ENCODE measurements at regions of chr2 and their contacts with region 1.

Region 1: DNA sequence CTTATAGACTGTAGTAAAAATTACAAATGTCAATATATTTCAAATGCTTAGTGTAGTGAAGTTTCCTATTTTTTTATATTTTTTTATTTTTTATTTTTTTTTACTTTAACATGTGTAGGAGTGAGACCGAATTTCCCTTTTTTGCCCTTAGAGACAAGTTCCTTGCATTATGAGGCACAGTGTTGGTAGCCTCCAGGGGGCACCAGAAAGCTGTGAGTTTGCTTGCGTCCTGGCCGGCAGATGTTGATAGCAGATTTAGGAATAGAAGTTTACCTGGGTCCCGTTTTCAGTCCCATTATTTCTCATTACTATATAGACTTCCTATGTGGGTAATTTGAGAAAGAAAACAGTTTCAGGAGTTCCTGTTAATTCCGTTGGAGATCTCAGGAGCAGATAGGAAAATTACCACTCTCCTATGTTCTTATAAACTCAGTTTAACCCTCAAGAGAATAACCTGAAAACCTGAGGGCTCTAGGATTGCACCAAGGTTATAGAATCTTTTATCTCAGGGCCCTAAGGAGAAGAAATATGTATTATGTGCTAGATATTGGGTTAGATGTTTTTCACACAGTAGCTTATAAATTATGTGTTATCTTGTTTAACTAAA is 157.5 kb upstream of the SESTD1 start:
- DNase-seq: peak; percentile 61
- H3K4me3 ChIP-seq: no peak overlapping the region
- H3K27ac ChIP-seq: no peak overlapping the region
- H3K4me1 ChIP-seq: no peaks in the 10 kb centered on the region
- H3K27me3 ChIP-seq: peaks cover 34% of the 10 kb centered on the region
- CTCF ChIP-seq: peak; percentile 79

Region 2: DNA sequence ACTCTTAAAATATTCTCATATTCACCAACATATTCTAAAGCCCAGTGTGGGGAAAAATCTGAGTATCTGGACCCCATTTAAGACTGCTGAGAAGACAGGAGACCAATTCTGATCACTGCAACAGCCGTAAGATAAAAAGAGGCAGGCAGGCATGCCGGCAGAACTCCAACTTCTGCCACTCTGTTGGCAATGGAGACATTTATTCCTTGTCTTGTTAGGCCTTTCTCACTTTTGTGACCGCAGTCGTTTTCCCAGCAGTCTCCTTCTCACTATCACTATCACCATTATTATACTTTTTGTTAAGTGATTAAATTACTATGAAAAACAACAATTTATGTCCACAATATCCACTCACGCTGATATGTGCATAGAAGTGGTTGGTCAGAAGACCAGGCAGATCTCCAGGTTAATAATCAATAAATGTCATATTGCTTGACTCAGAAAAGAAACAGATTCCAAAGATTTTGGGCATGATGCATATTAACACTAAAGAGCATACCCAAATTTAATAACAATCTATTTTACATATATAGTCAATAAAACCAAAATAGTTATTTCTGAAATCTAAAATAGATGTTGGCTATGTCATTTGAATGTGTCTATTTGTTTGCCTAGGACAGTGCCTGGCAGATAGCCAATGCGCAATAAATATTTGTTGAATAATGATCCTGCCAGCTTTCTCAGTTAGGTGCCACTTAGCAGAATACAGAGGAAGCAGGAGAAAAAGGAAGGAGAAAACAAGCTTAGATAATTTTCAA is 195.8 kb before region 1 on chr2:
- intact Hi-C with region 1: no loop called
- DNase-seq: no peak
- H3K4me3 ChIP-seq: no peak overlapping the region
- H3K27ac ChIP-seq: peak overlapping the region; percentile 4
- H3K4me1 ChIP-seq: peaks cover 50% of the 10 kb centered on the region
- H3K27me3 ChIP-seq: no peaks in the 10 kb centered on the region
- CTCF ChIP-seq: no peak

Region 3: GRCh38 chr2:179749210-179749609 is 327.1 kb after region 1 on chr2:
- intact Hi-C with region 1: loop called (anchors 10 kb)
- DNase-seq: no peak
- H3K4me3 ChIP-seq: no peak overlapping the region
- H3K27ac ChIP-seq: no peak overlapping the region
- H3K4me1 ChIP-seq: peaks cover 4% of the 10 kb centered on the region
- H3K27me3 ChIP-seq: peaks cover 28% of the 10 kb centered on the region
- CTCF ChIP-seq: no peak

Region 4: GRCh38 chr2:180040146-180040925 is 618.2 kb after region 1 on chr2:
- intact Hi-C with region 1: no loop called
- DNase-seq: no peak
- H3K4me3 ChIP-seq: no peak overlapping the region
- H3K27ac ChIP-seq: no peak overlapping the region
- H3K4me1 ChIP-seq: no peaks in the 10 kb centered on the region
- H3K27me3 ChIP-seq: peaks cover 17% of the 10 kb centered on the region
- CTCF ChIP-seq: no peak

Measured in left ventricle myocardium inferior (tissue), 1 donor.